ENCODE measurements at regions of chr16 and their contacts with region 1.

Region 1: DNA sequence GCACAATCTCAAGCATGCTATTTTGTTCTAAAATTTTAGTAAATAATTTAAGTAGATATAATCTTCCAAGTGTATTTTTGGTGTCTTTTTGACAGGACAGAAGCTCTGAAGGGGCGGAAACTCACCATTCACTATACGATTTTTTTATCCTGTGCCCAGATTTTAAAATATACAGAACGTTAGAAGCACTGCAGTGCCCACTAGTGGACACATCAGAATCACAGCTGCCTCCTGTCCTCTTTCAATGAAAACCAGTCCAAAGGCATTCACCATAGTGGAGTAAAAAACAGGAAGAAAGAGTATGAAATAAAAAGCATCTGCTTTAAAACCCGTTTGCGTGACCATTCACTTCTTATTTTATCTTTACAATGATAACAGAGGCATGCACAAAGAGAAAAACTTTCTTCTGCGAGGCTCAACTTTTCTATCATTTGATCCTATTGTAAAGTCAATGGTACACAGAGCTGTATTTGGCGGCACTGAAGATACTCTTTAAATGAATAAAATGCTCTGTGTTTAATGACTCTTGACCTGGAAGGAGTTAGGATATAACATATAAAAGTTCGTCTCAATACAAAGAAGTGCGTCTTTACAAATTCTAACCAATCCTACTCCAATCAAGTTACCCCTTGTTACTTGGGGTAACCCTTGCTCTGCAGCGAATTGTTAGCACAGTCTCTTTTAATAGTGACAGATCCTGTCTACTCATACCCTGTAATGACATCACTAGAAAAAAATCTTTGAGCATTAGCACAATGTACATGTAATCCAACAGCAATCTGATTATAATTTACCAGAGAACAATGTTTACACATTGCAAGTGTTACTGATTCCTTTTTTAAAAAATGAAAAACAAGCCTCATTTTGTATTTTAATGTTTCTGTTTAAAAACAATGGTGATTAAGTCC is 339.8 kb upstream of the PSMD7 start:
- DNase-seq: peak; percentile 45
- CTCF ChIP-seq: peak; percentile 77

Region 2: DNA sequence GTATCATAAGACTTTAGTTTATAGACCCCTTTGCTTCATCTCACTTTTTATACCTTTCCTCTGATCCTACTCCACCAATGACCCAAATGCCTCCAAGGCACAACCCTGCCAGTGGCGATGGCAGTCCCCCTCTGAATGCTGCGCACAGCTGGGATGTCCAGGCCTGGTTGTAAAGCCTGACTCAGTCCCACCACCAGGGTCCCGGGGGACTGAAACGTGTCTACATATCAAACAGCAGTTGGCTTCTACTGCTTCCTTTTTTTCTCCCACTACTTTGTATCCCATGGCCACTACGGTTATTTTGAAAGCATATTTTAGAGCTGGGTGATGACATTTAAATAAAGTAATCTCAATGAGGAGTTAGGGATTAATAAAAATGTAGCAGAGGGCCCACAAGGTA is 10.0 kb after region 1 on chr16:
- CTCF ChIA-PET with region 1: interaction called, 20 read pairs
- POLR2A ChIA-PET with region 1: no interaction called
- DNase-seq: no peak
- CTCF ChIP-seq: no peak

Region 3: DNA sequence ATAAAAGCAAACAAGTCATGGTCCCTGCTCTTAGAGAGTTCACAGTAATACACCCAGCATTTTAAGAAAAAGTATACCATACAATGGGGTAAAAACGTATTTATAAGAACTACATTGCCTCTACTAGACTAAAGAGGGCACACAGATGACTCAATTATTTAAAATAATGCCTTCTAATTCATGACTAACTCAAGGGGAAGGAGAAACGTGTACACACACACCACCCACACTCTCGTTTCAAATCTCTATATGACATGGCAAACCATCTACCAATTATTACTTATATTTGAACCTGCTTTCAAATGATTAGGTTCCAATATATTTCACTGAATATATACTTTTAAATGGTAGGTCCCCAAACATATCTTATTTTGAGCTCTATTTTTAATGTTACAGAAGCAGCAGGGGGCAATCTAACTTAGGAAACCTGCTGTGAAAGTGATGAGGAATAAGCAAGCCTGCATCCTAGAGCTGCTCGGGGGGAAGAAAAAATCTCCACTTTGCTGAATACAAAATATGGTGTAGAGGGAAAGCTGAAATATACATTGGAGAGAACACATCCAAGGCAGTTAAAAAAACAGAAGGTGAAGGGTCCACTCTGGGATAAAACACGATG is 107.4 kb after region 1 on chr16:
- CTCF ChIA-PET with region 1: no interaction called
- POLR2A ChIA-PET with region 1: no interaction called
- DNase-seq: no peak
- CTCF ChIP-seq: no peak